ENCODE measurements at regions of chr22 and their contacts with region 1.

Region 1: DNA sequence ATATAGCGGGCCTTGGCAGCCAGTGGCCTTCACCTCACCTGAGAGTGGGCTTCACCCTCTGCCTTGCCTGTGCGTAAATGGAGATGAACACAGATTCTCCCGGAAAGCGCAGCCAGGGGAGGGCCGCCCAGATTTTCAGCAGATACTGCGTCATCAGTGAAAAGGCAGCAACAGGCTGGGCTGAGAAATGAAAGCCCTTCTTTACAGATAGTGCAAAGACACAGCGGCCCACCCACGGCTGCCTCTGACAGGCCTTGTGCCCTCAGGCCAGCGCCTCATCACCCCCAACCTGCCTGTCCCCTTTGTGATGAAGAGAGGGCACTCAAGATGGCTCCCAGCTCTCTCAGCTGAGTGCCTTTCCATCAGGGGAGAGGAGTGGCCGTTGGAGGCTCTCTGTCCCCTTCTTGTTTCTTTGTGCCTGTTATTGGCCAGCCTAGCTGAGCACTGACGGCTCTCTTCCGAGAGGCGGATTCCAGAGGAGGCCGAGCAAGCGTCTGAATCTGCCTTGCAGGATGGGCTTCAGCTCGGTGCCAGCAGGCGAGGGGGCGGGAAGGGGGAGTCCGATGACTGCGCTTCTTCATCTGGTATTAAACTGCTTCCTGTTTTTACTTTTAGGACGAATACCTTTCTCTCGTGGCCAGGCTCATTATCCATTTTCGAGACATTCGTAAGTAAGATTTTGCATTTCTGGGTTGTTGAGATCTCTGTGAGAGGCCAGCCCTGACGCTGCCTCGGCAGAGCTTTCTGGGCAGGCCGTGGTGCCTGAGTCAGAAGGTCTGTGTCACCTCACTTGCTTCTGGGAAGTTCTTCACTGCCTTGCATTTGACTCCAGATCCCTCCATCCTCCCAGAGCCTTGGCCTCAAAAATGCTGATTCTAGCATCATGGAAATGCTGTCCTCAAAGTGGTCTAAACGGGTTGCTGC is 43.7 kb downstream of the MED15 start:
- DNase-seq: no peak
- H3K4me3 ChIP-seq: no peak overlapping the region
- CTCF ChIP-seq: no peak
- POLR2A ChIP-seq: no peak

Region 2: GRCh38 chr22:20507253-20508066 is 43.6 kb before region 1 on chr22 and contains the start of gene MED15:
- intact Hi-C with region 1: no loop called
- DNase-seq: peak; percentile 87 to 98
- H3K4me3 ChIP-seq: peak within 1 kb of the TSS; percentile 80
- CTCF ChIP-seq: no peak
- POLR2A ChIP-seq: peak in 1 of 2 donors; percentile 80
- total RNA-seq, gene MED15: 40.3 to 69.6 (median 49.2) TPM

Region 3: DNA sequence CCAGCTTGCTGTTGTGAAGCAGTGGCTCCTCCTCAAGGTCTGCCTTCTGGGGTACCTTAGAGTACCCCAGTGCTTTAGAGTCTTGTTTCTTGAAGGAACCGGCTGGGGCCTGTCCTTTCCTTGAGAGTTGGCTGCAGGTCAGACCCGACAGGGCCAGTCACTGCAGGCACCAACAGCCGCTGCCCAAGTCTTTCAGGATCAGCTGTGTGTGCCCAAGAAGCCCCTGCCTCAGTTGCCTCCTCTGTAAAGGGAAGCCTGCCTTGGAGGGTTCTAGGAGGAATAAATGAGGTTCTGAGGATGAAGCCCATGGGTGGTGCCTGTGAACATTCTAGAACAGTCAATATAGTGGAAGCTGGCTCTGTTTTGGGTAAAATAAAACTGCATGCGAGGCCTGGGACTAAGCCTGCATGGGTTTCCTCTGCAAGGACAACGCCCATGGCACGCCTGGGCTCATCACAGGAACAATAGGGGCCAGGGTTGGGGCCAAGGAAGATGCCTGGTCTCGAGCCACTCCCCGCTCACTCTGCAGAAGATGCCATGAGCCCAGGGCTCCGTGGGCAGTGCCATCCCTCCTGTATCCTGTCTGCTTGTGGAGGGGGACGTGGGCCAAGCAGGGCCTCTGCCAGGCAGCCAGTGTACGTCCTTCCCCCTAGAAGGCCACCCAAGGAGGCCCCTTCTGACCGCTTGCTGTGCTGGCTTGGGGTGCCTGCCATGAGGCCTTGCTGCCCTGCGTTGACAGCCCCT is 37.9 kb after region 1 on chr22:
- intact Hi-C with region 1: loop called (anchors 2 kb)
- DNase-seq: no peak
- H3K4me3 ChIP-seq: no peak overlapping the region
- CTCF ChIP-seq: no peak
- POLR2A ChIP-seq: no peak

Region 4: DNA sequence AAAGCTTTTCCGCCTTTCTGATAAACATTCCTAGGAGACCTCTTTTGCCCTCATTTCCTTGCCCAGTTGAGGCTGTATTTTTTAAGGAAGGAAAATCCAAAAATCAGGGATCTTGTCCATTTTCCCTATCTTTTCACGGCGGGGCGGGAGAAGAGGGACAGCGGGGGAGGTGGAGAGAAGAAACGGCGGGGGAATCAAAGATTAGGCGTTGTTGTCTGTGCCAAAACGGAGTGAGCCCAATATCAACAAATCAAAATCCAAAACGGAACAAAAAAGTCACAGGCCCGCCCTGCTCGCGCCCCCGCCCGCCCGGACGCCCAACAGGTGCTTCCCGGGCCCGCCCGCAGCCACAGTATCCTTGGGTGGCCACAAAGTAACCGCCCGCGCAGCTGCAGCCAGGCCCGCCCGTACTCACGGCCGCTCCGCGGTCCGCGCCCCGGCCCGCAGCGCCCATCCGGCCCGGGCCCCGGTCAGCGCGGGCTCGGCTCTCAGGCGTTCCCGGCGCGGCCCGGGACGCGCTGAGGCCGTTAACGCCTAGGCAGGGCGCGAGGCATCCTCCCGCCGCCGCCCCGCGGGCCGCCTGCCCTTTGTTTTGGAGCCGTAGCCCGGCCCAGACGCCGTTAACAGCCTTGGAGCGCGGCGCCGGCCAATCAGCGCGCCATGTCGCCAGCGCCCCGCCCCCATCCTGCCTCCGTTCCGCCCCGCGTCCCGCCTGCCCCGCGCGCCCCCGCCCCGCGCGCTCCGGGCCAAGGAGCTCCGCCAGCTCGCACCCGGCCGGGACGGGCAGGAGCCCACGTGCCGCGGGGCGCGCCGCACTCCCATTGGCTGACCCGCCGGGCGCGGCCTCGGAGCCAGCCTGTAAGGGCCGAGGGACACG is 1184.4 kb after region 1 on chr22 and contains the start of gene YPEL1:
- intact Hi-C with region 1: no loop called
- DNase-seq: peak; percentile 93 to 98
- H3K4me3 ChIP-seq: peak within 1 kb of the TSS; percentile 25
- CTCF ChIP-seq: no peak
- POLR2A ChIP-seq: peak in 1 of 2 donors; percentile 31
- total RNA-seq, gene YPEL1: 1.9 to 5.4 (median 2.8) TPM

Measured in lower leg skin (tissue), 4 donors.